Calu3 (cell line): ENCODE measurements at regions of chr7 and their contacts with region 1.

Region 1: DNA sequence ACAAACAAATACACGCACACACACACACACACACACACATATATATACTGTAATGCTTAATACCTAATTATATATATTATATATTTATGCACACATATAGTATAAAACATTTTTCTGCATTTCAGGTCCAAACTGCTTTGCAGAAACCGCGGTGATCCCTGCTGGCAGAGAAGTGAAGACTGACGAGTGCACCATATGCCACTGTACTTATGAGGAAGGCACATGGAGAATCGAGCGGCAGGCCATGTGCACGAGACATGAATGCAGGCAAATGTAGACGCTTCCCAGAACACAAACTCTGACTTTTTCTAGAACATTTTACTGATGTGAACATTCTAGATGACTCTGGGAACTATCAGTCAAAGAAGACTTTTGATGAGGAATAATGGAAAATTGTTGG is 138.5 kb downstream of the VWC2 start:
- DNase-seq: no peak
- H3K4me3 Mint-ChIP-seq: no peak overlapping the region
- H3K27ac Mint-ChIP-seq: no peak overlapping the region
- H3K4me1 Mint-ChIP-seq: no peaks in the 10 kb centered on the region
- H3K27me3 Mint-ChIP-seq: no peaks in the 10 kb centered on the region
- CTCF ChIP-seq: no peak

Region 2: DNA sequence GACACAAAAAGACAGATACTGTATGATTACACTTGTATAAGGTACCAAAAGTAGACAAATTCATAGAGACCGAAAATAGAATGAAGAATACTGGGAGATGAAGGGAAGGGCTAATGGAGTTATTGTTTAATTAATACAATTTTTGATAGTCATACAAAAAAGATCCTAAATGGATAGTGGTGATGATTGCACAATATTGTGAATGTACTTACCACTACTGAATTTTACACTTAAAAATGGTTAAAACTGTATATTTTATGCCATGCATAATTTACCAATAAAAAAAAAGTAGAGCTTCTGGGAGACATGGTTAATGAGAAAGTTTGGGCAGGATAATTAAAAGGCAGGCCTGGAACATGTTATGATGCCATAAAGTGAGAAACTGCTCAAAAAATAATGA is 62.1 kb after region 1 on chr7:
- CTCF ChIA-PET with region 1: no interaction called
- intact Hi-C with region 1: loop called (anchors 10 kb)
- DNase-seq: no peak
- H3K4me3 Mint-ChIP-seq: no peak overlapping the region
- H3K27ac Mint-ChIP-seq: no peak overlapping the region
- H3K4me1 Mint-ChIP-seq: no peaks in the 10 kb centered on the region
- H3K27me3 Mint-ChIP-seq: no peaks in the 10 kb centered on the region
- CTCF ChIP-seq: no peak